Mammary epithelial cell (primary cell): ENCODE measurements at regions of chr9 and their contacts with region 1.

Region 1: DNA sequence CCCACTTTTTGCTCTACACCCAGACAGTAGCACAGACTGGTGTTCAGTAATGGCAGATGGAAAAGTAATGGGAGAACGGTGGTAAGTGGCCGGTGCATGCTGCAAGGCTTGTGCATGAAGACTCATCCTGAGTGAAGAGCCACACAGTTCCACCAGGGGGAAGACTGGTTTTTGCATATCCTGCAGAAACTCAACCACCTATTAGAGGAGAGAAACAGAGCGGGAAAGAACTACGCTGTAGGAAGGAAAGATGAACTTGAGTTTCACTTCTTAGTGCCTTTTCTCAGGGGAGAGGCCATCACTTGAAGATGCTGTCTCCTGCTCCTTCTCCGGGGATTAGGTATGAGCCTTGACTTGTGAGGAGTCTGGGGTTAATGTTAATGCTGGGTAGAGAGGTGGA is 9.4 kb upstream of the PRSS3 start:
- DNase-seq: no peak
- H3K4me3 ChIP-seq: no peak overlapping the region
- H3K27ac ChIP-seq: no peak overlapping the region
- H3K4me1 ChIP-seq: peaks cover 14% of the 10 kb centered on the region
- H3K27me3 ChIP-seq: no peaks in the 10 kb centered on the region
- CTCF ChIP-seq: no peak

Region 2: DNA sequence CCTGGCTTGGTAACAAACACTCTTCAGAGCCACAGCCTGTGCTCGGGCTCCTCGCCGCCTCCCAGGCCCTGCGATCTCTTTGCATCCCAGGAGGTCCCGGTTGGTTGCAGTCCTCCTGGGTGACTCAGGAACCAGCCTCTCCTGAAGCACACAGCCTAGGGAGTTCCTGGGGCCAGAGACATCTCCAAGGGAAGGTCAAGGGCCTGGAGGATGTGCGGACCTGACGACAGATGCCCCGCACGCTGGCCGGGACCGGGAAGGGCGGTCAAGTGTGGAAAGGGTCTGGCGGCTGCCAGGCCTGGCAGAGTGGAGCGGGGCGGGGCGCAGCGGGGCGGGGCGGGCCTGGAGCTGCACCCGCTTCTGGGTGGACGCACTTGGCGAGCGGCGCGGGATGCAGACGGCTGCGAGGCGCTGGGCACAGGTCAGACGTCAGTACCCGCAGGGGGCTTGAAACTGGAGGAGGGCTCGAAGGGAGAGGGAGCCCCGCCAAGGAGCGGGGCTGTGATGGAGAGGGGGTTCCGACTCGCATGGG is 35.5 kb before region 1 on chr9:
- CTCF ChIA-PET with region 1: no interaction called
- dilution Hi-C with region 1: loop called (anchors 5 kb)
- in situ Hi-C with region 1: no loop called
- intact Hi-C with region 1: no loop called
- DNase-seq: no peak
- H3K4me3 ChIP-seq: peak overlapping the region; percentile 66 to 74 (median 68)
- H3K27ac ChIP-seq: no peak overlapping the region
- H3K4me1 ChIP-seq: peaks cover 17% of the 10 kb centered on the region
- H3K27me3 ChIP-seq: no peaks in the 10 kb centered on the region
- CTCF ChIP-seq: no peak